ENCODE measurements at regions of chr6 and their contacts with region 1.

Region 1: DNA sequence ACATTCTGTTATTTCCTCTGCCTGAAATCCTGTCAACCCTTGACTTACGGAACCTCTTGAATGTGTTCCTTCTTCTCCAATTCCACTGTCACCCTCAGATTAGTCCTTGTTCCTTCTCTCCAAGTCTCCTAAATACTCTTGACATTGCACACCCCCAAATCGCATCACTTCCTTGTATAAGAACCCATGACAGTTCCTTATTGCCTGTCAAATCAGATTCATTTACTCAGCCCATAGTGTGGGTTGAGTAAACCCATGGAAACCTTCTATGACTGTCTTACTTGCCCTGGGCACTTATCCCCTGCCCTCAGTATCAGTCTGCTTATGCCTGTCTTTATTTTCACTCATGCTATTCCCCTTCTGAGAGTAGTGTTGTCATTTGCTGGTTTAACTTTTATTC is 40.5 kb downstream of the ARMC2 start:
- DNase-seq: no peak
- H3K4me3 ChIP-seq: no peak overlapping the region
- H3K27ac ChIP-seq: no peak overlapping the region
- H3K27me3 ChIP-seq: no peaks in the 10 kb centered on the region
- CTCF ChIP-seq: no peak

Region 2: GRCh38 chr6:108841377-108841855 is 47.3 kb before region 1 on chr6:
- intact Hi-C with region 1: loop called in 1 of 2 experiments (anchors 5 kb)
- DNase-seq: no peak
- H3K4me3 ChIP-seq: no peak overlapping the region
- H3K27ac ChIP-seq: peak overlapping the region in 4 of 59 donors; percentile 4 to 61 (median 27)
- H3K27me3 ChIP-seq: no peaks in the 10 kb centered on the region
- CTCF ChIP-seq: no peak

Region 3: GRCh38 chr6:109059571-109060021 is 170.9 kb after region 1 on chr6:
- intact Hi-C with region 1: no loop called
- DNase-seq: no peak
- H3K4me3 ChIP-seq: peak overlapping the region in 8 of 59 donors; percentile 2 to 33 (median 6)
- H3K27ac ChIP-seq: peak overlapping the region in 26 of 59 donors; percentile 1 to 59 (median 32)
- H3K27me3 ChIP-seq: no peaks in the 10 kb centered on the region
- CTCF ChIP-seq: peak in 49 of 56 donors; percentile 7 to 53 (median 36)

Measured in dorsolateral prefrontal cortex (tissue), 120 donors.